Dorsolateral prefrontal cortex (tissue), 120 donors: ENCODE measurements at regions of chr9 and their contacts with region 1.

Region 1: GRCh38 chr9:119788921-119789320 is 419.7 kb upstream of the BRINP1 start:
- DNase-seq: no peak
- H3K4me3 ChIP-seq: no peak overlapping the region
- H3K27ac ChIP-seq: peak overlapping the region in 19 of 59 donors; percentile 1 to 79 (median 38)
- H3K27me3 ChIP-seq: no peaks in the 10 kb centered on the region
- CTCF ChIP-seq: no peak

Region 2: GRCh38 chr9:119736491-119737454 is 52.1 kb before region 1 on chr9:
- intact Hi-C with region 1: loop called in 1 of 2 experiments (anchors 2 kb)
- DNase-seq: peak in 8 of 10 donors; percentile 15 to 66 (median 52)
- H3K4me3 ChIP-seq: no peak overlapping the region
- H3K27ac ChIP-seq: peak overlapping the region in 8 of 59 donors; percentile 8 to 61 (median 15)
- H3K27me3 ChIP-seq: no peaks in the 10 kb centered on the region
- CTCF ChIP-seq: no peak